ENCODE measurements at regions of chr18 and their contacts with region 1.

Region 1: DNA sequence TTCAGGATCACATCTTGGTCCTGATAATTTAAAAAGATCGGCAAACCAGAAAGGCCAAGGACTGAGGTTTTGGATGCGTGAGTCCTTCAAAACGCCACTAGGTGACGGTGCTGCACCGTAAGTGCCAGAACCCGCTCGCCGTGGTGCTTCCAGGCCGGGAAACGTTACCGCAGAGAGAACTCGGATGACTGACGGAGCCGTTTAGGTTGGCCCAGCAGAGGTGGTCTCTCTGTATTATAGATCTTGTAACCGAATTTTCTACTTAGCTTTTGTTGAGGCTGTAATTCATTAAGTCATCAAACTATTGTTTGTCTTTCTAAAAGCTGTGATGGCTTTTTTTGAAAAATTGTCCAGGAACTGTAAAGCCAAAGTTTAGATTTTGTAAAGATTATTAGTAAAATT is 39.8 kb upstream of the ADCYAP1 start:
- DNase-seq: peak; percentile 82
- ATAC-seq: peak; percentile 96
- H3K4me3 ChIP-seq: no peak overlapping the region
- H3K27ac ChIP-seq: no peak overlapping the region
- H3K4me1 ChIP-seq: no peaks in the 10 kb centered on the region
- H3K27me3 ChIP-seq: peaks cover 8% of the 10 kb centered on the region
- CTCF ChIP-seq: peak; percentile 96

Region 2: GRCh38 chr18:923141-923866 is 58.4 kb after region 1 on chr18:
- intact Hi-C with region 1: no loop called
- DNase-seq: no peak
- ATAC-seq: no peak
- H3K4me3 ChIP-seq: no peak overlapping the region
- H3K27ac ChIP-seq: no peak overlapping the region
- H3K4me1 ChIP-seq: no peaks in the 10 kb centered on the region
- H3K27me3 ChIP-seq: no peaks in the 10 kb centered on the region
- CTCF ChIP-seq: no peak

Region 3: GRCh38 chr18:961644-962355 is 96.9 kb after region 1 on chr18:
- intact Hi-C with region 1: loop called (anchors 10 kb)
- DNase-seq: no peak
- ATAC-seq: peak; percentile 44
- H3K4me3 ChIP-seq: peak overlapping the region; percentile 31
- H3K27ac ChIP-seq: no peak overlapping the region
- H3K4me1 ChIP-seq: no peaks in the 10 kb centered on the region
- H3K27me3 ChIP-seq: no peaks in the 10 kb centered on the region
- CTCF ChIP-seq: peak; percentile 95

Measured in upper lobe of right lung (tissue), 1 donor.